Transverse colon (tissue), 4 donors: ENCODE measurements at regions of chr5 and their contacts with region 1.

Region 1: DNA sequence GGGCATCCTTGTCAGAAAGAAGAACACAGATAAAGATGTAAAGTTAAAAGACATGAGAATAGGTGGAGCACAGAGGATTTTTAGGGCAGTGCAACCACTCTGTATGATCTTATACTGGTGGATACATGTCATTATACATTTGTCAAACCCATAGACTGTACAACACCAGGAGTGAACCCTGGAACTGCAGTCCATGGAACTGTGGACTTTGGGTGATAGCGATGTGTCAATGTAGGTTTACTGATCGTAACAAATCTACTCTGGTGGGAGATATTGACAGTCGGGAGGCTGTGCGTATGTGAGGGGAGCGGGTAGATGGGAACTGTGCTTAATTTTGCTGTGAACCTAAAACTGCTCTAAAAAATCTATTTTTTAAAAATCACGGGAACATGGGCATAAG is 60.6 kb downstream of the MROH2B start:
- DNase-seq: no peak
- H3K4me3 ChIP-seq: no peak overlapping the region
- H3K27ac ChIP-seq: no peak overlapping the region
- H3K4me1 ChIP-seq: no peaks in the 10 kb centered on the region
- H3K27me3 ChIP-seq: no peaks in the 10 kb centered on the region
- CTCF ChIP-seq: no peak
- EP300 ChIP-seq: no peak
- POLR2A ChIP-seq: no peak

Region 2: DNA sequence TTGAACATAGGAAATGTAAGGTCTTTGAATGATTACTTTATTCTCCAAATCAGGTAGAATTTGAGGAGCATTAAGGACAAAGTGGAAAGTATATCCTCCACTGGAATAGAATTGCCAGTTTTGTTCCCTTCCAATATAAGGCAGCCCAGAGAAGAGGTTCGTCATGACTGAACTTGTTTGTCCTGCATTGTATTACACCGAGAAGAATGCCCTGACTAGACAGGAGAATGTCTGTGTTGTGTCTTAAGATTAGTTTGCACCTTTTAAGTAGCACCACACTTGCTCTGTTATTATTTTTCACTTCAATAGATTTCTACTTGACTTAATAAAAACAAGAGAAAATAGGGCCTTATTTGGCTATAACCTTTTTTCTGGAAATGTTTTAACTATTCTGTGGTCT is 917.0 kb before region 1 on chr5:
- in situ Hi-C with region 1: no loop called
- intact Hi-C with region 1: no loop called
- DNase-seq: no peak
- H3K4me3 ChIP-seq: no peak overlapping the region
- H3K27ac ChIP-seq: peak overlapping the region in 3 of 4 donors; percentile 17 to 42 (median 35)
- H3K4me1 ChIP-seq: peaks cover 0 to 4% (median 0%) of the 10 kb centered on the region in 4 donors
- H3K27me3 ChIP-seq: no peaks in the 10 kb centered on the region
- CTCF ChIP-seq: no peak
- EP300 ChIP-seq: peak; percentile 47
- POLR2A ChIP-seq: no peak

Region 3: GRCh38 chr5:40981420-40981819 is 29.2 kb before region 1 on chr5:
- in situ Hi-C with region 1: no loop called
- intact Hi-C with region 1: loop called (anchors 1 kb)
- DNase-seq: no peak
- H3K4me3 ChIP-seq: no peak overlapping the region
- H3K27ac ChIP-seq: no peak overlapping the region
- H3K4me1 ChIP-seq: peaks cover 0 to 3% (median under 1%) of the 10 kb centered on the region in 4 donors
- H3K27me3 ChIP-seq: no peaks in the 10 kb centered on the region
- CTCF ChIP-seq: no peak
- EP300 ChIP-seq: no peak
- POLR2A ChIP-seq: no peak